Activated CD4-positive, alpha-beta T cell treated with anti-CD3 and anti-CD28 coated beads, Interleukin-2, amount 10 ng/mL, durations not matched to agents 24 days and 14 days (primary cell): ENCODE measurements at regions of chrX and their contacts with region 1.

Region 1: DNA sequence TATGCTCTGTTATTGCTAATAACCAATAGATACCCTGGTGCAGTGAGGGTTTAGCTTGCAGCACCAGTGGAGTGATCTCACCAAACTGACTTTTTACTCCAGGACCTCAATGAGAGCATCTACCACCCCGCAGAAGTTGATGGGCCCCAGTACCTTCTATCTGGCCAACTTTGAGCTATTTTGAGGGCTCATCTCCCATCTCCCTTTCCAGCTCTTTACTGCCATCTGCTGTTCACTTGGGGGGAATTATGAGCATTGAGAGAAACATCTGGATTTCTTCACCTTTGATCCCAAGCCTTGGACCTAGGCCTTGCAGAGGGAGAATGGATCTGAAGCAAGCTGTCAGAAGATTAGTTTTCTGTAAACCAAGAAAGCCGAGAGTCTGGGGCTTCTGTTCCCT is 143.6 kb downstream of the TMEM164 start:
- DNase-seq: peak; percentile 77
- H3K4me3 Mint-ChIP-seq: no peak overlapping the region
- H3K27ac Mint-ChIP-seq: no peak overlapping the region
- H3K4me1 Mint-ChIP-seq: peaks cover 6% of the 10 kb centered on the region
- H3K27me3 Mint-ChIP-seq: no peaks in the 10 kb centered on the region

Region 2: GRCh38 chrX:109911046-109911445 is 235.5 kb before region 1 on chrX:
- intact Hi-C with region 1: loop called (anchors 2 kb)
- DNase-seq: no peak
- H3K4me3 Mint-ChIP-seq: no peak overlapping the region
- H3K27ac Mint-ChIP-seq: no peak overlapping the region
- H3K4me1 Mint-ChIP-seq: no peaks in the 10 kb centered on the region
- H3K27me3 Mint-ChIP-seq: peaks cover 4% of the 10 kb centered on the region

Region 3: DNA sequence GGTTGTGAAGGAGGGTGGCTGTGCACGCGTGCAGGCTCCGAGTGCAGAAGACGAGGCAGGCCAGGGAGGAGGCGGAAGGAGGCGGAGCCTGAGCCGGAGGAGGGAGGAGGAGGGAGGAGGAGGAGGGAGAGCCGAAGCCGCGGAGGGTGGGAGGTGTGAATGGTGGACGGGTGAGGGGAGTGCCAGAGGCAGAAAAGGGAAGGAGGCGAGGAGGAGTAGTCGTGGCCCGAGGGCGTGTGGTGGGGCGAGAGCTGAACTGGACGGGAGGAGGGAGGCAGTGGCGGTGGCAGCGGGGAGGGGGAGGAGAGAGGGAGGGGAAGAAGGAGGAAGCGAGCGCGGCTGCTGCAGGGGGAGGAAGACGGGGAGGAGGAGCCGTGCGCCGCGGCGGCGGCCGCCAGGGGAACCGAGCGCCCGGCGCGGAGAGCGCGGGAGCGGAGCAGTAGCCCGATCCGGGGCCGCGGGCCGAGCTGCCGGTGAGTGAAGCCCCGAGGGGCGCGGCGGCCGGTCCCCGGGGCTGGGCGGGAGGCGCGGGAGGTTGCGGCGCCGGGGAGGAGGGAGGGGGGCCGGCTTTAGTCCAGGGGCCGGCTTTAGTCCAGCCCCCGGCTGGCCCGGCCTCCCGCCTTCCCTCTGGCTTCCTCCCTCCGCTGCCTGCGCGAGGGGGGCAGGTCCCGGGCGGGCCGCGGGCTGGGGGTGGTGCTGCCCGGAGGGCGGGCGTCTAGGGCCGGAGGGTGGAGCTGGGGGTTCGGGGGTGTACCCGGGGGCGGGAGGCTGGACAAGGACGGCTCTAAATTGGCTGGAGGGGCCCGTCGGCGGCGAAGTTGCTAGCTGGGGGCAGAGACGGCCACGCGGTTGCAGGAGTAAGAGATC is 144.0 kb before region 1 on chrX and contains the start of gene TMEM164:
- intact Hi-C with region 1: loop called (anchors 10 kb)
- DNase-seq: peak; percentile 94
- H3K4me3 Mint-ChIP-seq: peak within 1 kb of the TSS; percentile 89
- H3K27ac Mint-ChIP-seq: peak within 1 kb of the TSS; percentile 96
- H3K4me1 Mint-ChIP-seq: peaks cover 28% of the 10 kb centered on the region
- H3K27me3 Mint-ChIP-seq: no peaks in the 10 kb centered on the region
- total RNA-seq, gene TMEM164: 14.9 and 18.3 TPM in 2 replicates

Region 4: GRCh38 chrX:110407910-110408545 is 261.5 kb after region 1 on chrX:
- intact Hi-C with region 1: loop called (anchors 1 kb)
- DNase-seq: peak; percentile 85
- H3K4me3 Mint-ChIP-seq: no peak overlapping the region
- H3K27ac Mint-ChIP-seq: no peak overlapping the region
- H3K4me1 Mint-ChIP-seq: peaks cover 5% of the 10 kb centered on the region
- H3K27me3 Mint-ChIP-seq: peaks cover under 1% of the 10 kb centered on the region